ENCODE measurements at regions of chr4 and their contacts with region 1.

Region 1: GRCh38 chr4:16026160-16026761 is 57.6 kb downstream of the PROM1 start:
- DNase-seq: peak; percentile 26
- H3K4me3 Mint-ChIP-seq: no peak overlapping the region
- H3K27ac Mint-ChIP-seq: no peak overlapping the region
- H3K4me1 Mint-ChIP-seq: no peaks in the 10 kb centered on the region
- H3K27me3 Mint-ChIP-seq: peaks cover 13% of the 10 kb centered on the region

Region 2: DNA sequence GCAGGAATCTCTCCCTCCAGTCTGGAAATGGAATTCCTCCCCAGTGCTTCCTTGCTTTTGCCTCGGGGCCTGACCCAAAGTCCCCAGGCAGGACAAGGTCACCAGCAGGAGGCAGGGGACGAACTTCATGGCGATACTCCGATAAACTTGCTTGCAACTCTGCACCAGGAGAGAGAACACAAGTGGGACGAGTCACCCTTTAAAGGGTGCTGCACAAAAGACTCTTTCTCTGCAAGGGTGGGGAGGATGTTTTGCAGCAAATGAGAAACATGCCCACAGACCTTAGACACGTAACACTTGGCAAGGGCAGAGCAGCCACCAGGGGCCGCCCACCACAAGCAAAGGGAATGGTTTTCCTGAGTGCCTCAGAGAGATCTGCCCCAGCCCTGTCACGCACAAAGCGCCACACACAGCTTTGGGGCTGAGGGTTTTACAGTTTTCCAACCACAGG is 63.2 kb before region 1 on chr4 and contains the start of gene FGFBP2:
- CTCF ChIA-PET with region 1: no interaction called
- intact Hi-C with region 1: loop called (anchors 1 kb)
- DNase-seq: peak; percentile 76
- H3K4me3 Mint-ChIP-seq: no peak within 1 kb of the TSS
- H3K27ac Mint-ChIP-seq: no peak within 1 kb of the TSS
- H3K4me1 Mint-ChIP-seq: peaks cover 11% of the 10 kb centered on the region
- H3K27me3 Mint-ChIP-seq: peaks cover 2% of the 10 kb centered on the region
- total RNA-seq, gene FGFBP2: not detected

Region 3: DNA sequence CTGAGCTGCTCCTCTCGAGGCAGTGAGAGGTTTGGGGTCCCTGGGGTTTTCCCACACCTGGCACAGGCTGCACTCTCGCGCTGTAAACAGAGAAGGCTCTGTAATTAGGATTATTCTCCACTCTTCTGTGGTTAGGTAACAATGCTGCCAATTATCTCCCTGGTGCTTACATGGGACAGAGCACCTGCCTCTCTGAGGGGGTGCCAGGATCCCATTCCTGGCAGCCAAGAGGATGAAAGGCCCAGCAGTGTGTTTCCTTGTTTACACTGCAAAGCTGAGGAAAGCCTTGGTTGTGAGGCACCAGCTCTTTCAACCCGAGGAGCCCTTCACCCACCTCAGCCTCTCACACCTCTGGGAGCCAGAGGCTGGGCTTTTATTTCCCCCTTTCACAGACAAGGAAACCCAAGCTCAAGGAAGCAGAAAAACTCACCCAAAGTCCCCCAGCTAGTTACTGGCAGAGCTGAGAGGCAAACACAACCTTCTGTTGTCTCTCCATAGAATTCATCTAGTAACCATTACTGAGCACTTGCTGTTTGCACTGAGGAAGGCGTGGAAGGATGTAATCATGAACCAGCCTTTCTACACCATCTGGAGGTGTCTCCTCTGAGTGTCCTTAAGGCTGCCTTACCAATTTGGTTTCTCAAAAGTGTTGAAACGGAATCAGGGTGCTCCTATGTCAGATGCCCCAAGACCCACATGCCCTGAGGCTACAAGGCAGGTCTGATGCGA is 97.3 kb after region 1 on chr4:
- CTCF ChIA-PET with region 1: interaction called, 4 read pairs
- intact Hi-C with region 1: loop called (anchors 2 kb)
- DNase-seq: no peak
- H3K4me3 Mint-ChIP-seq: no peak overlapping the region
- H3K27ac Mint-ChIP-seq: peak overlapping the region; percentile 85
- H3K4me1 Mint-ChIP-seq: peaks cover 25% of the 10 kb centered on the region
- H3K27me3 Mint-ChIP-seq: no peaks in the 10 kb centered on the region

Region 4: DNA sequence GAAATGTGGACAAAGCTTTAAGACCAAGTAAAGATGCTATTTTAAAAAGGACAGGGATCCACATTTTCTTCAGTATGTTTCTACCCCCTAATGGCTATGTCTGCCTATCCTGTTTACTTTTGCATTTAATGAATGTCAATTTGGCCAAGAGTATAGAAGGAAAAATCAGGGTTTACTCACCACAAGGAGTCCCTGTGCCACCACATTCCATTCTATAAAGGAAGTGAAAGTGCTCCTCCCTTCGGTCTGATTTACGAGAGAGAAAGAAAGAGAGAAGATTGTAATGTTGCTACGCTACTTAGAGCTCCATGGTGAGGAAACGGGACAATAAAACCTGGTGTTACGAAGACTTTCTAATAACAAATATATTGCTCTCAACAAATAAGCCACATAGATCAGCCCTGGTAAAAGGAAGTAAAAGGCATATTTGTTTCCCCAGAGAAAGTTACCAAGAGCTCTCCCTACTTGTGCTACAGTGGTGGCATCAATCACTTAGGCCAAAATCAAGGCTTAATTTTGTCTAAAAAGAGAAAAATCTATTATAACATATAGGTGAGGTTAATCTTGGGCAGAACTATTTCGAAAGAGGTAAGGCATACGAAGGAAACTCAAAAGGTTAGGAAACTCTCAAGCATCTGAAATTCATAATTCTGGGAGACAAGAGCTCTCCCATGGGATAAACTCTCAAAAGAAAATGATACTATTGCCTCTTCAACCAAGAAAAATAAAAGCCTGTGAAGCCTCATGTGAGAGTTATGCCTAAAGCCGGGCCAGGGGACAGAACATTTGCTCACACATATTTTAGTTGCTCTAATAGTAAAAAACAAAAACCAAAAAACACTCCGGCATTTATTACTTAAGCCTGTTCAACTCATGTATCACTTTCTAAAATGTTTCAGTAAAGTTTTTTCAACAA is 170.5 kb after region 1 on chr4:
- CTCF ChIA-PET with region 1: interaction called, 6 read pairs
- intact Hi-C with region 1: loop called (anchors 1 kb)
- DNase-seq: no peak
- H3K4me3 Mint-ChIP-seq: no peak overlapping the region
- H3K27ac Mint-ChIP-seq: no peak overlapping the region
- H3K4me1 Mint-ChIP-seq: peaks cover 29% of the 10 kb centered on the region
- H3K27me3 Mint-ChIP-seq: no peaks in the 10 kb centered on the region

Region 5: DNA sequence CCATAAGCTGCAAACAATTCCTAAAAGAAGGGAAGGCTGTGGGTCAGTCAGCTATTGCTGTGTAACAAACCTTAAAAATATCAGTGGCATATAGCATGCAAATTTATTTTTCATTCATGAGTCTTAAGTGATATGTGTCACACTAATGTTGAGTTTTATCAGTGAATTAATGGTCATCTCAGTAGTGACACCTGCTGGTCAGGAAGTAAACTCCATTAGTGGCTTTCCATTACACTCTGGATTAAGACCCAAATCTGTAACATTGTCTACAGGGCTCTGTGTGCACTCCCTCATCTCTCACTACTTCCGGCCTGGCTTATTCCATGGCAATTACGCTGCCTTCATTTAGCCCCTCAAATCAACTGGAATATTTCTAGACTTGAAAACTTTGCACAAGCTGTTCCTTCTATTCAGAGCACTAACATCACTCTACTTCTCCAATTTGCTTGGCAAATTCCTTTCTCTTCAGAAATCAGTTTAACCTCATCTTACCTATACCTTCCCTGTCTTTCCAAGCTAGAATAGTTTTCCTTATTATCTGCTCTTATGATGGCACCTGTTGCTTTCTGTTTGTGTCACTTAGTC is 417.3 kb after region 1 on chr4:
- CTCF ChIA-PET with region 1: no interaction called
- intact Hi-C with region 1: loop called (anchors 1 kb)
- DNase-seq: no peak
- H3K4me3 Mint-ChIP-seq: no peak overlapping the region
- H3K27ac Mint-ChIP-seq: no peak overlapping the region
- H3K4me1 Mint-ChIP-seq: no peaks in the 10 kb centered on the region
- H3K27me3 Mint-ChIP-seq: peaks cover 7% of the 10 kb centered on the region